ENCODE measurements at regions of chr6 and their contacts with region 1.

Region 1: DNA sequence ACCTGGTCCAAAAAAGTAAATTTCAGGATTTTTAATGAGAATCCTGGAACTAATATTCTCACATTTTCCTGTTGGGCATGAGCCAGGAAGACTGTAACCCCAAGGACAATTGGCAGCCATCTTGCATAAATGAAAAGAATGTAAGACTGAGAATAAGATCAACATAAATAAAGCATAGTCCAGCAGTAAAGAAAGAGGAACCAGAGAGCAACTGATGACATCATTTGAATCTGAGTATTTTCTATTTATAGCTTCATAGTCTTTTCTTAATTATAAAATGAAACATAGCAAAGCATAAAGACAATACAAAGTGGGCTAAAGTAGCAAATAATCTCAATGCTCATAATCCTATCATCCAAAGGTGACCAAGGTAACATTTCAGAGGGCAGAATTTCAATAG is 26.6 kb upstream of the FBXL4 start:
- DNase-seq: no peak
- H3K4me3 ChIP-seq: no peak overlapping the region
- H3K4me3 Mint-ChIP-seq: no peak overlapping the region
- H3K27ac ChIP-seq: no peak overlapping the region
- H3K27ac Mint-ChIP-seq: no peak overlapping the region
- H3K4me1 ChIP-seq: no peaks in the 10 kb centered on the region
- H3K4me1 Mint-ChIP-seq: peaks cover 6 to 18% (median 7%) of the 10 kb centered on the region in 3 donors
- H3K27me3 ChIP-seq: no peaks in the 10 kb centered on the region
- H3K27me3 Mint-ChIP-seq: peaks cover 5 to 12% of the 10 kb centered on the region in 2 donors

Region 2: DNA sequence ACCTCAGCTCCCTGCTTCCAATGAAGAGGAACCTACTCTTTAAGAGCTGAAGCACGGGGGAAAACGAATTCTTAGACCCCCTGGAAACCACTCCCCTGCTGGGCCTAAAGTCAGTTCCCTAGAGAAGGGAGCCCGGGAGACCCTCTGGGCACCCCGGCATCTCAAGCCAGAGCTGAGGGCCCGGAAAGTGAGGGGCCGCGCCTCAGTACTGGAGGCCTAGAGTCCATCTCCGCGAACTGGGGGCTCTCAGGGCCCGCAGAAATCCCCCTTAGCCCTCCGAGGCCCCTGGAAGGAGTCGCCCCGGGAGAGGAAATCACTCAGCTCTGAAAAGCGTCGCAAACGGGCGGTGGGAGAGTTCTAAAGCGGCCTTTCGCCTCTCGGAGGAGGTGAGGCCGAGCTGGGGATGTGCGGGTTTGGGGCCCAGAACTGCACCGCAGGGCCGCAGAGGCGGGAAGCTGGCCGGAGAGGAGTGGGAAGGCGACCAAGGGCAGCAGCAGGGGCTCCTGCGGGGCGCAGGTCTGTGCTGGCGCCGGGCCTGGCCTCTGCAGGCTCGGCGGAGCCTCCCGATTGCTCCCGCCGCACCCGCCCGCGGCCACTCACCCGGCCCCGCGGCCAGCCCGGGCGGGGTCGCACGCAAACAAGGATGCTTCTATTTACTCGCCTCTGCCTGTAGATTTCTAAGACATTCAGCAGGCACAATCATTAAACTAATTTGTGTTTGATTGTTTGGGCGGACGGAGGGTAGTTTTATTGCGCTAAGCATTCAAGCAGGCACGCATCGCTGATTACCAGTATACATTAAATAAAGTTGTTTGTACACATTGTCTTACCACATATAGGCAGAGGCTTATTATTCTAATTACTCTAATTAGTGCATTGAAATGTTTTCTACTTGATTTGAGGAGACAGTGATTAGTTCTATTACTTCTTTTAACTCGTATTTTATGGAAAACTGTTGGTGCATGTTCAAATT is 130.8 kb before region 1 on chr6:
- CTCF ChIA-PET with region 1: no interaction called
- POLR2A ChIA-PET with region 1: interaction called, 10 read pairs
- DNase-seq: no peak
- H3K4me3 ChIP-seq: no peak overlapping the region
- H3K4me3 Mint-ChIP-seq: peak overlapping the region in 4 of 7 donors; percentile 10 to 66 (median 14)
- H3K27ac ChIP-seq: no peak overlapping the region
- H3K27ac Mint-ChIP-seq: peak overlapping the region in 2 of 8 donors; percentile 22 to 36
- H3K4me1 ChIP-seq: peaks cover 11% of the 10 kb centered on the region
- H3K4me1 Mint-ChIP-seq: peaks cover 19 to 36% (median 20%) of the 10 kb centered on the region in 3 donors
- H3K27me3 ChIP-seq: peaks cover 86% of the 10 kb centered on the region
- H3K27me3 Mint-ChIP-seq: peaks cover 68 to 87% of the 10 kb centered on the region in 2 donors

Region 3: DNA sequence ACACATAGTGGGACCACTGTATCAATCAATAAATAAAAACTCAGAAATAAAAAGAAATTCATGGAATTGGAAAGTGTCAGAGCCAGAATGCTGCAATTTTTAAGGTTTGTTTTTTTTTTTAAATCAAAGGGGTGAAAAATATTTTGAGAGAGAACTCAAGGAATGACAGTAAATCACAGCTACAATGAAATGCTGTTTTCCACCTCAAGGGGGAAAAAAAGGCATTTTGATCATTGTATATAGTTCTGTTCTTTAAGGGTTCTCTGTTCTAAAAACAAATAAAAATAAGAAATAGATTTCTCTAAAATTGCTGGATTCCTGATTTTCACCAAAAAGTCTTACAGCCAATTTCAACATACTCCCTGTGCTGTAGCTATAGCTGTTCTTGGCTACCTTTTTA is 350.7 kb after region 1 on chr6:
- CTCF ChIA-PET with region 1: no interaction called
- POLR2A ChIA-PET with region 1: no interaction called
- DNase-seq: no peak
- H3K4me3 ChIP-seq: no peak overlapping the region
- H3K4me3 Mint-ChIP-seq: no peak overlapping the region
- H3K27ac ChIP-seq: no peak overlapping the region
- H3K27ac Mint-ChIP-seq: no peak overlapping the region
- H3K4me1 ChIP-seq: no peaks in the 10 kb centered on the region
- H3K4me1 Mint-ChIP-seq: peaks cover 0 to under 1% (median 0%) of the 10 kb centered on the region in 3 donors
- H3K27me3 ChIP-seq: peaks cover 6% of the 10 kb centered on the region
- H3K27me3 Mint-ChIP-seq: peaks cover 9 to 36% of the 10 kb centered on the region in 2 donors

Measured in CD8-positive, alpha-beta memory T cell (primary cell).